ENCODE measurements at regions of chr9 and their contacts with region 1.

Region 1: GRCh38 chr9:22446950-22447617 is 460 bp downstream of the DMRTA1 start:
- DNase-seq: peak; percentile 63
- H3K4me3 ChIP-seq: peak overlapping the region; percentile 68 to 86 (median 71)
- H3K27ac ChIP-seq: no peak overlapping the region
- H3K4me1 ChIP-seq: no peaks in the 10 kb centered on the region
- H3K27me3 ChIP-seq: no peaks in the 10 kb centered on the region
- CTCF ChIP-seq: peak; percentile 12 to 49

Region 2: DNA sequence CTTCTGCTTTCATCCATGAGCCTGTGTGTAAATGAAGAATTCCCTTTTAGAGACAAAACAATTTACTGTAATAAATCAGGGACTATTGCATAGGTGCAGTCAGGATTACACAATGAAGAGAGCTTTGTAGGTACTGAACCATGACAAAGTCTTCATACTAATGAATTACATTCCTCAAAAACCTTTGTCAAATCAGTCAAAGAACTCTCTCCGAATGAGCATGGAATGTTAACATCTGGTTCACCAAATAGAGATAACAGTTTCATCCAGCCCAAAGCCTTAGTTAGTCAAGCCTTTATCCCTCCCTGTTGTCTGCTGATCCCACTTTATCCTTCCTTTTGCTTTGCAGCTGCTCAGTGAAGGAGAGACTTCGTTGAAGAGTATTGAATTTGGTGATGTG is 63.4 kb before region 1 on chr9:
- CTCF ChIA-PET with region 1: no interaction called
- dilution Hi-C with region 1: no loop called
- in situ Hi-C with region 1: no loop called
- intact Hi-C with region 1: loop called (anchors 10 kb)
- DNase-seq: peak; percentile 23
- H3K4me3 ChIP-seq: no peak overlapping the region
- H3K27ac ChIP-seq: no peak overlapping the region
- H3K4me1 ChIP-seq: no peaks in the 10 kb centered on the region
- H3K27me3 ChIP-seq: peaks cover 1% of the 10 kb centered on the region
- CTCF ChIP-seq: no peak

Region 3: DNA sequence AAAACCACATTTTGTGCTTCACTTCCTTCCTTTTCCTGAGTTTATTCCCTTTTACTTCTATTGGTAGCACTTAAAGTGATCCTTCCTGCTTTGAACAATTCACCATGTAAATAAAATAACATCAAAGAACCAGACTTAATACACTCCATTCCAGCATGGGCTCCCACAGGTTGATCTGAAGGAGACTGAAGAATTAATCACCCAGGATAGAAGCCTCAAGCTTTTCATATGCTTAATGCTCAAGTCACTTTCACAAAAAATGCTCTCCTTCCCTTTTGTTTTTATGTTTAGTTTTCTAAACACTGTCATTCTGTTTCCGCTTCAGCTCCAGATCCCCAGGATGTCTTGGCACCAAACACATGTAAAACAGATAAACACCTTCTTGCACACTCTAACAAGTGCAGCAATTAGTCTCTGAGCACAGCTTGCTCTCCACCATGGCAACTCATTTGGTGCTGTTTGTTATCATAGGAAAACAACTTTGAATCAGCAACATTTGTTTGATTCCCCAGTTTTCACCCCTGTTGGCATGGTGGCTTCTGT is 36.5 kb after region 1 on chr9:
- CTCF ChIA-PET with region 1: no interaction called
- dilution Hi-C with region 1: no loop called
- in situ Hi-C with region 1: no loop called
- intact Hi-C with region 1: no loop called
- DNase-seq: no peak
- H3K4me3 ChIP-seq: no peak overlapping the region
- H3K27ac ChIP-seq: no peak overlapping the region
- H3K4me1 ChIP-seq: no peaks in the 10 kb centered on the region
- H3K27me3 ChIP-seq: no peaks in the 10 kb centered on the region
- CTCF ChIP-seq: no peak

Region 4: GRCh38 chr9:22622815-22623214 is 175.7 kb after region 1 on chr9:
- CTCF ChIA-PET with region 1: no interaction called
- dilution Hi-C with region 1: no loop called
- in situ Hi-C with region 1: no loop called
- intact Hi-C with region 1: no loop called
- DNase-seq: no peak
- H3K4me3 ChIP-seq: no peak overlapping the region
- H3K27ac ChIP-seq: no peak overlapping the region
- H3K4me1 ChIP-seq: no peaks in the 10 kb centered on the region
- H3K27me3 ChIP-seq: peaks cover 3% of the 10 kb centered on the region
- CTCF ChIP-seq: no peak